MCF 10A (cell line): ENCODE measurements at regions of chr2 and their contacts with region 1.

Region 1: DNA sequence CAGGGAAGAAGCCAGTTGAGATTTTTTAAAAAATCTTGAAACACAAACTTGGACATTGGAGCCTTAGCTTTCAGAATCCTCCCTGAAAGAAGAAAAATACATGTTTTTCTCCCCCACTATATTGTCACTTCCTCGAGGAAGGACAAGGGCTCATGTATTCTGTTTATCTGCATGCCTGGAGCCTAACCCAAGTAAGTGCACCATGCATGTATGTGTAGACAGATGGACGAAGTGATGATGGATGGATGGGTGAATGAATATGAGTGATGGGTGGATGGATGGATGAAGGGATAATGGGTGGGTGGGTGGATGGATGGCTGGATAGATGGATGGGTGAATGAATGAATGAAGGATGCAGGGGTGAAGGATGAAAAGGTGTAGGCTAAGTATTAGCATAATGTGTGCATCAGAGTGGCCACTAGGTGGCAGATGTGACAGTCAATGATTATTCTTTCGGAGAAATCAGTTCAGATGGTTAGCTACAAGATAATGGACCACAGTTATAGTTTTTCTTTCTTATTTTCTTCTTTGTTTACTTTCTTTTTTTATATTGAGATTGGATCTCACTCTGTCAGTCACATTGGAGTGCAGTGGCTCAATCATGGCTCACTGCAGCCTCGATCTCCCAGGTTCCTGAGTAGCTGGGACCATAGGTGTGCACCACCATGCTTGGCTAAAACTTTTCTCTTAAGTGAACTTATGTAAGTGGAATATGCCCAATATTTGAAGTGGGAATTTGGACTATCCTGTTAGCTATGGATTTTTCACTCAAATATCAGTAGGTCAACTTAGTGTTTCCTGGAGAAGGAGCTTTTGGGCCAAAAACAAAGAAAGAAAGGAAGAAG is 18.5 kb upstream of the CCDC93 start:
- DNase-seq: peak; percentile 60
- H3K4me3 Mint-ChIP-seq: no peak overlapping the region
- H3K27ac Mint-ChIP-seq: no peak overlapping the region
- H3K4me1 Mint-ChIP-seq: no peaks in the 10 kb centered on the region
- H3K27me3 Mint-ChIP-seq: peaks cover 70% of the 10 kb centered on the region
- CTCF ChIP-seq: peak; percentile 46

Region 2: GRCh38 chr2:117814417-117815264 is 217.8 kb before region 1 on chr2 and contains the start of gene DDX18:
- CTCF ChIA-PET with region 1: no interaction called
- POLR2A ChIA-PET with region 1: no interaction called
- intact Hi-C with region 1: no loop called
- DNase-seq: peak; percentile 99
- H3K4me3 Mint-ChIP-seq: peak within 1 kb of the TSS; percentile 87
- H3K27ac Mint-ChIP-seq: peak within 1 kb of the TSS; percentile 95
- H3K4me1 Mint-ChIP-seq: no peaks in the 10 kb centered on the region
- H3K27me3 Mint-ChIP-seq: peaks cover 10% of the 10 kb centered on the region
- CTCF ChIP-seq: peak; percentile 97
- total RNA-seq, gene DDX18: 88.7 and 101 TPM in 2 replicates

Region 3: GRCh38 chr2:117846737-117847136 is 185.7 kb before region 1 on chr2:
- CTCF ChIA-PET with region 1: no interaction called
- POLR2A ChIA-PET with region 1: no interaction called
- intact Hi-C with region 1: no loop called
- DNase-seq: no peak
- H3K4me3 Mint-ChIP-seq: no peak overlapping the region
- H3K27ac Mint-ChIP-seq: no peak overlapping the region
- H3K4me1 Mint-ChIP-seq: no peaks in the 10 kb centered on the region
- H3K27me3 Mint-ChIP-seq: peaks cover 15% of the 10 kb centered on the region
- CTCF ChIP-seq: no peak

Region 4: GRCh38 chr2:118013724-118014491 is 18.5 kb before region 1 on chr2 and contains the start of gene CCDC93:
- CTCF ChIA-PET with region 1: interaction called, 12 read pairs
- POLR2A ChIA-PET with region 1: interaction called, 10 read pairs
- intact Hi-C with region 1: no loop called
- DNase-seq: peak; percentile 80
- H3K4me3 Mint-ChIP-seq: peak within 1 kb of the TSS; percentile 83
- H3K27ac Mint-ChIP-seq: peak within 1 kb of the TSS; percentile 64
- H3K4me1 Mint-ChIP-seq: peaks cover 33% of the 10 kb centered on the region
- H3K27me3 Mint-ChIP-seq: no peaks in the 10 kb centered on the region
- CTCF ChIP-seq: no peak
- total RNA-seq, gene CCDC93: 37.8 and 44.9 TPM in 2 replicates

Region 5: GRCh38 chr2:118021361-118021760 is 11.0 kb before region 1 on chr2:
- CTCF ChIA-PET with region 1: interaction called, 12 read pairs
- POLR2A ChIA-PET with region 1: no interaction called
- intact Hi-C with region 1: no loop called
- DNase-seq: no peak
- H3K4me3 Mint-ChIP-seq: no peak overlapping the region
- H3K27ac Mint-ChIP-seq: no peak overlapping the region
- H3K4me1 Mint-ChIP-seq: peaks cover 6% of the 10 kb centered on the region
- H3K27me3 Mint-ChIP-seq: peaks cover 22% of the 10 kb centered on the region
- CTCF ChIP-seq: no peak

Region 6: GRCh38 chr2:118061135-118061955 is 29.0 kb after region 1 on chr2:
- CTCF ChIA-PET with region 1: interaction called, 164 read pairs
- POLR2A ChIA-PET with region 1: interaction called, 3 read pairs
- intact Hi-C with region 1: loop called (anchors 1 kb)
- DNase-seq: peak; percentile 87
- H3K4me3 Mint-ChIP-seq: no peak overlapping the region
- H3K27ac Mint-ChIP-seq: no peak overlapping the region
- H3K4me1 Mint-ChIP-seq: peaks cover 6% of the 10 kb centered on the region
- H3K27me3 Mint-ChIP-seq: no peaks in the 10 kb centered on the region
- CTCF ChIP-seq: peak; percentile 33

Region 7: GRCh38 chr2:118847497-118848172 is 815.2 kb after region 1 on chr2 and contains the start of gene EN1:
- CTCF ChIA-PET with region 1: no interaction called
- POLR2A ChIA-PET with region 1: no interaction called
- intact Hi-C with region 1: no loop called
- DNase-seq: no peak
- H3K4me3 Mint-ChIP-seq: peak within 1 kb of the TSS; percentile 25
- H3K27ac Mint-ChIP-seq: no peak within 1 kb of the TSS
- H3K4me1 Mint-ChIP-seq: no peaks in the 10 kb centered on the region
- H3K27me3 Mint-ChIP-seq: no peaks in the 10 kb centered on the region
- CTCF ChIP-seq: no peak
- total RNA-seq, gene EN1: not detected in 2 replicates

Region 8: DNA sequence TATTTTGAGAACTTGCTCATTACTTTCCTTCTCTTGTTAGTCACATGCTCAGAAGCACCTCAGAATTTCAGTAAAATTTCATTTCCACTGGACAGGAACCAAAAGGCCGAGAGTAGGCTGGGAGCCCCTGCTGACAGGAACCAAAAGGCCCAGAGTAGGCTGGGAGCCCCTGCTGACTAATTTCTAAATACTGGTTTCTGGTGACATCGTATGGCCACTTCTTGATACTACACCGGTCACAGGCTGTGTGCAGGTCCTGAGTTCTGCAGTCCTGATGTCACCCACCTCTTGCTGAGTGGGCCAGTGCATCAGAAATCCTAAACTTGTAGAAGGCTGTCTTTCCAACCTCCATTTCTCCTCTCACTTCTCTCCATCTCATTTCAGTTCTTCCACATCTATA is 832.7 kb after region 1 on chr2:
- CTCF ChIA-PET with region 1: interaction called, 5 read pairs
- POLR2A ChIA-PET with region 1: interaction called, 3 read pairs
- intact Hi-C with region 1: loop called (anchors 2 kb)
- DNase-seq: peak; percentile 65
- H3K4me3 Mint-ChIP-seq: no peak overlapping the region
- H3K27ac Mint-ChIP-seq: no peak overlapping the region
- H3K4me1 Mint-ChIP-seq: peaks cover 14% of the 10 kb centered on the region
- H3K27me3 Mint-ChIP-seq: no peaks in the 10 kb centered on the region
- CTCF ChIP-seq: peak; percentile 80